A549 (cell line): ENCODE measurements at regions of chr19 and their contacts with region 1.

Region 1: GRCh38 chr19:30123174-30123573 is 181.1 kb downstream of the URI1 start:
- DNase-seq: no peak
- ATAC-seq: no peak
- H3K4me3 ChIP-seq: no peak overlapping the region
- H3K27ac ChIP-seq: no peak overlapping the region
- H3K4me1 ChIP-seq: no peaks in the 10 kb centered on the region
- CTCF ChIP-seq: no peak
- EP300 ChIP-seq: no peak
- POLR2A ChIP-seq: no peak
- RAD21 ChIP-seq: no peak

Region 2: GRCh38 chr19:30064348-30064699 is 58.9 kb before region 1 on chr19:
- CTCF ChIA-PET with region 1: no interaction called
- POLR2A ChIA-PET with region 1: no interaction called
- DNase-seq: no peak
- ATAC-seq: peak in 1 of 2 experiments; percentile 4; a peak in 1 of 6 replicates
- H3K4me3 ChIP-seq: no peak overlapping the region
- H3K27ac ChIP-seq: no peak overlapping the region
- H3K4me1 ChIP-seq: no peaks in the 10 kb centered on the region
- CTCF ChIP-seq: no peak
- EP300 ChIP-seq: no peak
- POLR2A ChIP-seq: no peak
- RAD21 ChIP-seq: no peak

Region 3: GRCh38 chr19:30087381-30088138 is 35.6 kb before region 1 on chr19:
- CTCF ChIA-PET with region 1: no interaction called
- POLR2A ChIA-PET with region 1: no interaction called
- DNase-seq: no peak
- ATAC-seq: no peak
- H3K4me3 ChIP-seq: no peak overlapping the region
- H3K27ac ChIP-seq: no peak overlapping the region
- H3K4me1 ChIP-seq: no peaks in the 10 kb centered on the region
- CTCF ChIP-seq: no peak
- EP300 ChIP-seq: no peak
- POLR2A ChIP-seq: no peak
- RAD21 ChIP-seq: no peak

Region 4: DNA sequence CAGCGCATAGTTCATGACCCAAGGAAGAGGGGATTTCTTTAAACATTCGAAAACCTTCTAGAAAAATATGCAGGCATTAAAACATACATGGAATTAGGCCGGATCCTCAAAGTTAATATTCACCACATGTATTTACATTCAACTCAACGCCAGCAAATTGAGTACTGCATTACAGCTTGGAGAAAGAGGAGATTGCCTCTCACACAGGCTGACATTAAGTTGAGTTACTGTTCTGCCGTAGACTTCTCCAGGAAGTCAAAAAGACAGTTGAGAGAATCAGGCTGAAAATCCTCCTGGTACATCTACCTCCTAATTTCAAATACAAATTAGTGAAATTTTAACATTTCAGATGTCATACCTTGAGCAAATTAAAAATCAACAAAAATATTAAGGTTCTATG is 14.6 kb after region 1 on chr19:
- CTCF ChIA-PET with region 1: interaction called, 10 read pairs
- POLR2A ChIA-PET with region 1: no interaction called
- DNase-seq: no peak
- ATAC-seq: no peak
- H3K4me3 ChIP-seq: no peak overlapping the region
- H3K27ac ChIP-seq: no peak overlapping the region
- H3K4me1 ChIP-seq: no peaks in the 10 kb centered on the region
- CTCF ChIP-seq: no peak
- EP300 ChIP-seq: no peak
- POLR2A ChIP-seq: no peak
- RAD21 ChIP-seq: no peak